IMR-90 (cell line): ENCODE measurements at regions of chr22 and their contacts with region 1.

Region 1: DNA sequence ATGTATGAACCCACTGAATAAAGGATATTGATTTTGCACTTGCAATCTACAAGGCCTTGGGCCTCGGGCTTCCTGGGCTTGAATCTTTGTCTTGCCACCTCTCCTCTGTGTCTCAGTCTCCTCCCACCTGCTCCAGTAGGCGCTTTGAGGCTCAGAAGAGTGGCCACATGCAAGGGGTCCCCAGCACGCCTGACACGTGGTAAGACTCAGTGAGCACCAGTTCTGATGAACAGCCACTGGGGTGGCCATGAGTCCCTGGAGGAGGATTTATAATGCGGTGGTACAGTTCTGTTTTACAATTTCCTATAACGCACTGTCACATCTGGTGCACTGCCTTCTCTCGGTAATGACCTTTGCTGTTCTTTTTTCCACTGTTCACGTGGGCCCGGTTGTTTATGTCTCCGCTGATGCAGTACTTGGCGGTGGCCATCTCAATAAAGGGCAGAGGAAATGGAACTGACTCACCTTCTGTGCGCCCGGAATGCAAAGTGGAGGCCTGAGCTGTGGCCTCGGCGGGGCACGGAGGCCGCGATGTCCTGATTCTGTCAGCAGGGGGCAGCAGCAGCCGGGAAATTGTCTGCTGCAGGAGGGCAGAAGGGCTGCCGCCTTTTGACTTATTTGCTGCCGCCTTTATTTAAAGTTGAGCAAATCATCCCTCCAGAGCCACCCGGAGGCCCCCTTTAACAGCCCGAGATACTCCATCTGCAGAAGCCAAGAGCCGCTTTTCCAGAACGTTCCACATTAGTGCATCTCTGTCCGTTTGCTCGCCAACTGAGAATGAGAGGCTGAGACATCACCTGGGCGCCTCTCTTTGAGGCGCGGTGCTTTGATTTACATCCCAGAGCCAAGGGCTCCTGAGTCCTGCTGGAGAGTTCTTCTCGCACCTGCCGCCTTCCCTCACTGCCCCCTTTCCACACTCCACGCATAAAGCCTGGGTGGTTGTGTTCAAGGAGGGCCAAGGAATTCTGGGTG is 6.0 kb upstream of the IFT27 start:
- DNase-seq: peak; percentile 92
- ATAC-seq: peak; percentile 99
- H3K4me3 ChIP-seq: no peak overlapping the region
- H3K27ac ChIP-seq: peak overlapping the region; percentile 4; the same call in 1 of the 2 replicates
- H3K4me1 ChIP-seq: peaks cover 4% of the 10 kb centered on the region
- H3K27me3 ChIP-seq: peaks cover 26% of the 10 kb centered on the region
- CTCF ChIP-seq: peak; percentile 95
- POLR2A ChIP-seq: no peak
- RAD21 ChIP-seq: peak; percentile 90

Region 2: DNA sequence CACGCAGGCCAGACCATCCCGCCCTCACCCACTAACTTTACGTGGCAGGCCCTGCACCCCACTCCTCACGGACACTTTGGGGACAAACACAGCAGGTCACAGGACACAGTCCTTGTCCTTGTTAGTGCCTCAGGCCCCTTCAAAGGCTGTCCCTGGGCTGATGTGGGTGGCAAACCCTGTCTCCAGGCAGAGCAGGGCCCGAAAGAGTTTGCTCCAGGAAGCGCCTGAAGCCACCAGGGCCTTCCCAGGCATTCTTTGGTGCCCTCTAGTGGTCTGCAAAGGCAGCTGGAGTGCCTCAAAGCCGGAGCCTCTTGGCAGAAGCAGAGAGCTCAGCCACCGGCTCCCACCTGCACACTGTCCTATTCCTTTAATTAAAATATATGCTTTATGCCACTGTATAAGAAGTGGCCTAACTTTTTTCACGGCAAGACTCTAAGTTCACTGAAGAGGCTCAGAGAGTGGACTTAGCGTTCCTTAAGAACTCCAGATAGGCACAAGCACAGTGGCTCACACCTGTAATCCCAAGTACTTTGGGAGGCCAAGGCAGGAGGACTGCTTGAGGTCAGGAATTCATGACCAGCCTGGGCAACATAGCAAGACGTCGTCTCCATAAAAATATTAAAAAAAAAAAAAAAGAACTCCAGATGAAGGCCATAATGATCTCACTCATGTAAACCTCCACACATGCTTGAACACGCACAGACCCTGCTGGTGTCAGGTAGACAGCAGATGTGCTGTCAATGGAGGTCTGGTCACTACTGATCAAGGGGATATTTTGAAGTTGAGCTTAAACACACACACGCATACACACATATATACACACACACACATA is 311.6 kb before region 1 on chr22:
- CTCF ChIA-PET with region 1: no interaction called
- POLR2A ChIA-PET with region 1: no interaction called
- dilution Hi-C with region 1: no loop called
- in situ Hi-C with region 1: no loop called
- intact Hi-C with region 1: no loop called
- DNase-seq: peak; percentile 89
- ATAC-seq: peak; percentile 42
- H3K4me3 ChIP-seq: no peak overlapping the region
- H3K27ac ChIP-seq: peak overlapping the region; percentile 97
- H3K4me1 ChIP-seq: peaks cover 44% of the 10 kb centered on the region
- H3K27me3 ChIP-seq: no peaks in the 10 kb centered on the region
- CTCF ChIP-seq: peak; percentile 95
- POLR2A ChIP-seq: peak; percentile 68
- RAD21 ChIP-seq: peak; percentile 99

Region 3: GRCh38 chr22:36682811-36683210 is 99.1 kb before region 1 on chr22:
- CTCF ChIA-PET with region 1: no interaction called
- POLR2A ChIA-PET with region 1: no interaction called
- dilution Hi-C with region 1: no loop called
- in situ Hi-C with region 1: no loop called
- intact Hi-C with region 1: no loop called
- DNase-seq: no peak
- ATAC-seq: no peak
- H3K4me3 ChIP-seq: no peak overlapping the region
- H3K27ac ChIP-seq: no peak overlapping the region
- H3K4me1 ChIP-seq: no peaks in the 10 kb centered on the region
- H3K27me3 ChIP-seq: peaks cover 43% of the 10 kb centered on the region
- CTCF ChIP-seq: no peak
- POLR2A ChIP-seq: no peak
- RAD21 ChIP-seq: no peak

Region 4: GRCh38 chr22:36846949-36847348 is 65.0 kb after region 1 on chr22:
- CTCF ChIA-PET with region 1: no interaction called
- POLR2A ChIA-PET with region 1: no interaction called
- dilution Hi-C with region 1: no loop called
- in situ Hi-C with region 1: loop called (anchors 5 kb)
- intact Hi-C with region 1: no loop called
- DNase-seq: no peak
- ATAC-seq: no peak
- H3K4me3 ChIP-seq: no peak overlapping the region
- H3K27ac ChIP-seq: no peak overlapping the region
- H3K4me1 ChIP-seq: no peaks in the 10 kb centered on the region
- H3K27me3 ChIP-seq: peaks cover 55% of the 10 kb centered on the region
- CTCF ChIP-seq: no peak
- POLR2A ChIP-seq: no peak
- RAD21 ChIP-seq: no peak

Region 5: GRCh38 chr22:36856121-36856791 is 74.3 kb after region 1 on chr22:
- CTCF ChIA-PET with region 1: interaction called, 6 read pairs
- POLR2A ChIA-PET with region 1: no interaction called
- dilution Hi-C with region 1: no loop called
- in situ Hi-C with region 1: no loop called
- intact Hi-C with region 1: loop called (anchors 1 kb)
- DNase-seq: peak; percentile 79
- ATAC-seq: peak; percentile 98
- H3K4me3 ChIP-seq: no peak overlapping the region
- H3K27ac ChIP-seq: no peak overlapping the region
- H3K4me1 ChIP-seq: no peaks in the 10 kb centered on the region
- H3K27me3 ChIP-seq: peaks cover 26% of the 10 kb centered on the region
- CTCF ChIP-seq: peak; percentile 100; the same call in 1 of the 2 replicates
- POLR2A ChIP-seq: no peak
- RAD21 ChIP-seq: peak; percentile 80

Region 6: GRCh38 chr22:36977947-36978660 is 196.2 kb after region 1 on chr22:
- CTCF ChIA-PET with region 1: interaction called, 3 read pairs
- POLR2A ChIA-PET with region 1: no interaction called
- dilution Hi-C with region 1: no loop called
- in situ Hi-C with region 1: no loop called
- intact Hi-C with region 1: loop called (anchors 1 kb)
- DNase-seq: peak; percentile 76
- ATAC-seq: peak; percentile 99
- H3K4me3 ChIP-seq: peak overlapping the region; percentile 36
- H3K27ac ChIP-seq: no peak overlapping the region
- H3K4me1 ChIP-seq: no peaks in the 10 kb centered on the region
- H3K27me3 ChIP-seq: peaks cover 22% of the 10 kb centered on the region
- CTCF ChIP-seq: peak; percentile 97
- POLR2A ChIP-seq: no peak
- RAD21 ChIP-seq: peak; percentile 90

Region 7: DNA sequence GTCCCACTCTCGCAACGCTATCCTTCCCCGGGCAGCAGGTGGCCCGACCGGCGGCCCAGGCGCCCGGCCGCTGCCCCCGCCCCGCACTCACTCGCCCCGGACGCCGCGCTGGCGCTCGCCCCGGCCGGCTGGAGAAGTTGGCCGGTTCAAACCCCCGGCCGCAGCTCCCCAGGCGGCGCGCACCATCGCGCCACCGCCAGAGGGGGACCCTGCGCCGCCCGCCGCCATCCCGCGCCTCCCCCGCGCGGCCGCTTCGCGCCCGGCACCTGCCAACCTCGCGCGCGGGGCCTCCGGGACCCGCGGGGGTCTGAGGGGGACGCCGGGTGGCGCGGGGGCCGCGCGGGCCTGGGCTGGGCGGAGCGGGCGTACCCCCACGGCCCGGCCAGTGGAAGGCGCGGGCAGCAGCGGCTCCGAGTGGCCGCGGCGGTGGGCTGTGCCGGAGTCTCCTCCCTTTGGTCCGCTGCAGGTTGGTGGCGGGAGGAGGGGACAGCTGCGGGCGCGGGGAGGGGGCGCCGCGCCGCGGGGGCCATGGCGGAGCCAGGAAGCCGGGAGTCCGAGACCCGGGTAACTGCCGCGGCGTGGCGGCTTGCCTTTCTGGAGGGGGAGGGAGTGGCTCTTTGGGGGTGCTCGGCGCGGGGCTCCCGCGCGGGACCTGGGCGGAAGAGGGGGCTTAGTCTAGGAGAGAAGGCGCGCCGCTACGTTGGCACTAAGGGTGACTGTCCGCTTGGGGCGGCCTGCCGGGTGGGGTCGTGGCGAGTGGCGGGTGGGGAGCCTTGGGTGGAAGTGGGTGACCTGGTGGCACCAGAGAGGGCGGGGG is 237.6 kb after region 1 on chr22 and contains the starts of genes MPST and TST:
- CTCF ChIA-PET with region 1: no interaction called
- POLR2A ChIA-PET with region 1: no interaction called
- dilution Hi-C with region 1: no loop called
- in situ Hi-C with region 1: no loop called
- intact Hi-C with region 1: loop called (anchors 5 kb)
- DNase-seq: peak; percentile 61
- ATAC-seq: peak; percentile 92
- H3K4me3 ChIP-seq: peak within 1 kb of the TSS; percentile 80
- H3K27ac ChIP-seq: peak within 1 kb of the TSS; percentile 82
- H3K4me1 ChIP-seq: peaks cover 7% of the 10 kb centered on the region
- H3K27me3 ChIP-seq: no peaks in the 10 kb centered on the region
- CTCF ChIP-seq: 0 out of 2 replicates have a peak, but pooled peaks have one; percentile 4
- POLR2A ChIP-seq: peak; percentile 81
- RAD21 ChIP-seq: no peak
- total RNA-seq, gene MPST: 19.2 and 22.5 TPM in 2 replicates
- total RNA-seq, gene TST: 26.9 and 31.7 TPM in 2 replicates

Region 8: GRCh38 chr22:37199103-37199759 is 417.3 kb after region 1 on chr22:
- CTCF ChIA-PET with region 1: no interaction called
- POLR2A ChIA-PET with region 1: no interaction called
- dilution Hi-C with region 1: no loop called
- in situ Hi-C with region 1: no loop called
- intact Hi-C with region 1: loop called (anchors 5 kb)
- DNase-seq: peak; percentile 96
- ATAC-seq: peak; percentile 98
- H3K4me3 ChIP-seq: peak overlapping the region; percentile 58
- H3K27ac ChIP-seq: peak overlapping the region; percentile 84
- H3K4me1 ChIP-seq: peaks cover 20% of the 10 kb centered on the region
- H3K27me3 ChIP-seq: no peaks in the 10 kb centered on the region
- CTCF ChIP-seq: peak; percentile 95
- POLR2A ChIP-seq: peak; percentile 72; the same call in 1 of the 2 replicates
- RAD21 ChIP-seq: peak; percentile 74